Prostate gland (tissue), 2 donors: ENCODE measurements at regions of chr16 and their contacts with region 1.

Region 1: DNA sequence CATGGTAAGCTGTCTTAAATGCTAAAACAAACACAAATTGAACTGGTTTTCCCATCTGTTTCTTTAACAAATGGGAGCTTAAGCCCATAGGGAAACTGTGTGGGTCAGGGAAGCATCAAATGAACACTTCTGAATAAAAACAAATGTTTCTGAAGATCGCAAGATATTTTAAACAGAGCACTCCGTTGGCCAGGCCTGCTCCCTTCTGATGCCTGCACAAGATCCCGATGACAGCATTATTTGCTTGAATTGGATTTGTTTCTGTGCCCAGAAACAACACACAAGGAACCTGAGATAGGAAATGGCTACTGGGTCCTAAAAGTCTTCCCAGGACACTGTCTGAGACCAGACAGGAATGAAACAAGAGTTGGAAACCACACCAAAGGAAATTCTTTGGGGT is 425.8 kb upstream of the ZFHX3 start:
- DNase-seq: no peak
- H3K4me3 ChIP-seq: no peak overlapping the region
- H3K27ac ChIP-seq: no peak overlapping the region
- H3K4me1 ChIP-seq: no peaks in the 10 kb centered on the region
- H3K27me3 ChIP-seq: no peaks in the 10 kb centered on the region
- CTCF ChIP-seq: no peak
- POLR2A ChIP-seq: no peak

Region 2: DNA sequence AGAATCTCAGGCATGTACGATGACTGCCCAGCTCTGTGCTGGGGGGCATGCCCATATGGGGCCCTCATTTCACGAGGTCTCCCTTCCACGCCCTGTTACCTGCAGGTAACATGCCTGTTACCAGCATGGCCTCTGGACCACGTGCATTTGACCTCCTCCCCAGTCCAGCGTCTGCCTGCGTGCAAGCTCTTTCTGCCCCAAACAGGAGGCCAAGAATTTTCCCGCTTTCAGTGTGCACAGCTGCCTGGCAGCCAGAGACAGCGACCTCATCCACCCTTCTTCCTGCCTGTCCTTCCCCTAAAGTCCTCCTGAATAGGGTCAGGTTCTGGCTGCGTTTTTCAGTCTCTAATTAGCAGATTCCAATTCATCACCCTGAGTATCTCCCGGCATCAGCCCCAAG is 119.3 kb before region 1 on chr16:
- intact Hi-C with region 1: no loop called
- DNase-seq: no peak
- H3K4me3 ChIP-seq: no peak overlapping the region
- H3K27ac ChIP-seq: no peak overlapping the region
- H3K4me1 ChIP-seq: no peaks in the 10 kb centered on the region
- H3K27me3 ChIP-seq: no peaks in the 10 kb centered on the region
- CTCF ChIP-seq: no peak
- POLR2A ChIP-seq: no peak

Region 3: GRCh38 chr16:73418691-73419090 is 55.0 kb before region 1 on chr16:
- intact Hi-C with region 1: loop called (anchors 10 kb)
- DNase-seq: no peak
- H3K4me3 ChIP-seq: no peak overlapping the region
- H3K27ac ChIP-seq: no peak overlapping the region
- H3K4me1 ChIP-seq: no peaks in the 10 kb centered on the region
- H3K27me3 ChIP-seq: no peaks in the 10 kb centered on the region
- CTCF ChIP-seq: no peak
- POLR2A ChIP-seq: no peak

Region 4: GRCh38 chr16:73430138-73430537 is 43.6 kb before region 1 on chr16:
- intact Hi-C with region 1: no loop called
- DNase-seq: no peak
- H3K4me3 ChIP-seq: no peak overlapping the region
- H3K27ac ChIP-seq: no peak overlapping the region
- H3K4me1 ChIP-seq: no peaks in the 10 kb centered on the region
- H3K27me3 ChIP-seq: no peaks in the 10 kb centered on the region
- CTCF ChIP-seq: no peak
- POLR2A ChIP-seq: no peak